T-cell (primary cell): ENCODE measurements at regions of chr18 and their contacts with region 1.

Region 1: GRCh38 chr18:13112982-13113381 is 105.6 kb upstream of the LDLRAD4 start:
- DNase-seq: peak in 2 of 35 experiments; percentile 15 to 18
- ATAC-seq: no peak
- H3K4me3 ChIP-seq: no peak overlapping the region
- H3K4me3 Mint-ChIP-seq: no peak overlapping the region
- H3K27ac ChIP-seq: no peak overlapping the region
- H3K27ac Mint-ChIP-seq: no peak overlapping the region
- H3K4me1 ChIP-seq: no peaks in the 10 kb centered on the region
- H3K4me1 Mint-ChIP-seq: no peaks in the 10 kb centered on the region
- H3K27me3 ChIP-seq: no peaks in the 10 kb centered on the region
- H3K27me3 Mint-ChIP-seq: no peaks in the 10 kb centered on the region

Region 2: DNA sequence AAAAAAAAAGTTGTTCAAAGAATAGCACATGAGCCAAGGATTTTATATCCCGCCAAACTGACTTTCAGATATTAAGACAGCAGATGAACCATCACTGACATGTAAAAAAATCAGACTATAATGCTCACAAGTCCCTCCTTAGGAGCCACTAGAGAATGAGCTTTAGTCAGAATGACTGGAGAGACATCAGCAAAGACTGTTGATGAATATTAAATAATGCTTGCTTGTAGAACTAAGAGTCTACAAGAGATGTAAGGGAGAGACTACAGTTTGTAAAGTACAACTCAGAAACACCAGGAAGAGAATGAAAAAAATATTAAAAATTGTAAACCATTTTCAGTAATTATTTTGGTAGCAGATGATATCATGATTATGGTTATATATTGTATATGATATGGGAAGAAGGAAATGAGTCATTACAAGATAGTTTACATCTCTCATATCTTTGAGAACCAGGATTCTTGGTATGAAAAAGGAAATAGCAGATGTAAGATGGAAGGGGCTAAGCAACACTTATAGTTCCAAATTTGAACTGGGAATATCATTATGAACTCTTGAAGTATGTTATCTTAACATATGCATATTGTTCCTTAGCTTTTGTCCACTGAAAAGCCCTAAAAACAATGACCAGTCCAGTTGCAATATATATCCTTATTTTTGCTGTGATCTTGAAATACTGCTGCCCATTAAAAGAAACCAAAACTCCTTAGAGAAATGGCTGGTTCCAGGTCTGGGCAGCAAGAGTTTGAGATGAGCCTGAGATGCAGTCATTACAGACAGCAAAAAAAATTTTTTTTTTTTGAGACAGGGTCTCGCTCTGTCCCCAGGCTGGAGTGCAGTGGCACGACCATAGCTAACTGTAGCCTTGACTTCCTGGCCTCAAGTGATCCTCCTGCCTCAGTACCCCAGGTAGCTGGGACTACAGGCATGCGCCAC is 284.6 kb before region 1 on chr18:
- CTCF ChIA-PET with region 1: no interaction called
- POLR2A ChIA-PET with region 1: interaction called in 1 of 2 experiments, 10 read pairs
- DNase-seq: no peak
- ATAC-seq: no peak
- H3K4me3 ChIP-seq: no peak overlapping the region
- H3K4me3 Mint-ChIP-seq: no peak overlapping the region
- H3K27ac ChIP-seq: no peak overlapping the region
- H3K27ac Mint-ChIP-seq: no peak overlapping the region
- H3K4me1 ChIP-seq: no peaks in the 10 kb centered on the region
- H3K4me1 Mint-ChIP-seq: peaks cover 8 to 12% (median 8%) of the 10 kb centered on the region in 3 donors
- H3K27me3 ChIP-seq: no peaks in the 10 kb centered on the region
- H3K27me3 Mint-ChIP-seq: no peaks in the 10 kb centered on the region

Region 3: GRCh38 chr18:12960853-12961397 is 152.1 kb before region 1 on chr18:
- CTCF ChIA-PET with region 1: no interaction called
- POLR2A ChIA-PET with region 1: no interaction called
- DNase-seq: no peak
- ATAC-seq: no peak
- H3K4me3 ChIP-seq: no peak overlapping the region
- H3K4me3 Mint-ChIP-seq: no peak overlapping the region
- H3K27ac ChIP-seq: no peak overlapping the region
- H3K27ac Mint-ChIP-seq: no peak overlapping the region
- H3K4me1 ChIP-seq: no peaks in the 10 kb centered on the region
- H3K4me1 Mint-ChIP-seq: peaks cover 12 to 14% (median 13%) of the 10 kb centered on the region in 3 donors
- H3K27me3 ChIP-seq: no peaks in the 10 kb centered on the region
- H3K27me3 Mint-ChIP-seq: no peaks in the 10 kb centered on the region

Region 4: DNA sequence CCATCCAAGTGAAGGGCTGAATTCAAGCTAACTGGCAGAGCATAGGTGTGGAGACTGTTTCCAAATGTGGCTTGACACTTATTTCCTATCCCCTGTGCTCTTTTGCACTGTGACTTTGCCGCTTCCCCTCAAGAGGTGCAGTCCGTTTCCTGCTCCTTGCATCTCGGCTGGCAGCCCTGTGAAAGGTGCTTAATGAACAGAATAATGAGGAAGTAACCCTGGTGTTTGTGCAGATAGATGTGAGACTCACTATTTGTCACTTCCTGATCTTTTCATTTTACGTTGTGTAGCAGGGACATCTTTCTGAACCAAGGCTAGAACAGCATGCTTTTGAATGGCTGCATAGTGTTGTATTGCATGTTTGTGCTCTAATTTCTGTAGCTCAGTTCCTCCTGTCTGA is 61.0 kb before region 1 on chr18:
- CTCF ChIA-PET with region 1: no interaction called
- POLR2A ChIA-PET with region 1: no interaction called
- DNase-seq: peak in 3 of 35 experiments; percentile 4 to 26 (median 10)
- ATAC-seq: peak in 2 of 4 experiments; percentile 23 to 30
- H3K4me3 ChIP-seq: no peak overlapping the region
- H3K4me3 Mint-ChIP-seq: no peak overlapping the region
- H3K27ac ChIP-seq: no peak overlapping the region
- H3K27ac Mint-ChIP-seq: peak overlapping the region; percentile 50 to 80
- H3K4me1 ChIP-seq: peaks cover 2 to 5% of the 10 kb centered on the region in 2 experiments
- H3K4me1 Mint-ChIP-seq: peaks cover 9 to 13% (median 12%) of the 10 kb centered on the region in 3 donors
- H3K27me3 ChIP-seq: no peaks in the 10 kb centered on the region
- H3K27me3 Mint-ChIP-seq: no peaks in the 10 kb centered on the region

Region 5: DNA sequence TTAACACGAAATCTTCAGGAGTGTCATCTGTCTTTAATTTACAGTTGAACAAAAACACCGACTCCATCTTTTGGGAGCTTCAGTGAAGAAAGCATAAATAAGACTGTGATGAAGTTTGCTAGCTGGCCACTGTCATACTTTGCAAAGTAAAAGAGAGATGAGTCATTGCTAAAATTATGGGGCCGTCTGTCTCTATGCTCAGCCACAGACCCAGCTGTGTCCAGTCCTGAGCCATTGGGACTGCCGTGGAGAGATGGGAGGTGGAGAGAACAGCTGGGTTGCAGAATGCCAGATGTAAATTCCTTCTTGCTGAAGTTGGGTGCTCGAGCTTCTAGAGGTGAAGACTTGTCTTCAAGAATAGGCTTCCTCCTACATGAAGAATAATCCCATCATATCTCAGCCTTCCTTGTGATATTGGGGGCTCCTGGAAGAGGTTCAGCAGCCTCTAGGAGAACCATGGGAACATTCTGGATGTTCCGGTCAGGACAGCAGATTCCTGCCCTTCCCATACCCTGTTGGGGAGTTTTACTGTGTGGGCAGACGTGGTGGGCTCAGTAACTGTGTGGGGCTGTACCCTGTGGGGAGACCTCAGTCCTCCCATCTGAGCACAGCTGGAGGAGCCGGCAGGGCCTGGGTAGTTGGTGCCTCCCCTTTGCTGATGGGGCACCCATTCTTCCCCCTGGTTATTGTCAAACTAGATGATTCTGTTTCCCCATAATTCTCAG is 176.7 kb after region 1 on chr18:
- CTCF ChIA-PET with region 1: no interaction called
- POLR2A ChIA-PET with region 1: no interaction called
- DNase-seq: no peak
- ATAC-seq: no peak
- H3K4me3 ChIP-seq: no peak overlapping the region
- H3K4me3 Mint-ChIP-seq: no peak overlapping the region
- H3K27ac ChIP-seq: no peak overlapping the region
- H3K27ac Mint-ChIP-seq: peak overlapping the region in 1 of 2 donors; percentile 17
- H3K4me1 ChIP-seq: peaks cover 0 to 27% of the 10 kb centered on the region in 2 experiments
- H3K4me1 Mint-ChIP-seq: peaks cover 28 to 49% (median 40%) of the 10 kb centered on the region in 3 donors
- H3K27me3 ChIP-seq: peaks cover 0 to 7% of the 10 kb centered on the region in 2 experiments
- H3K27me3 Mint-ChIP-seq: no peaks in the 10 kb centered on the region